ENCODE measurements at regions of chr4 and their contacts with region 1.

Region 1: DNA sequence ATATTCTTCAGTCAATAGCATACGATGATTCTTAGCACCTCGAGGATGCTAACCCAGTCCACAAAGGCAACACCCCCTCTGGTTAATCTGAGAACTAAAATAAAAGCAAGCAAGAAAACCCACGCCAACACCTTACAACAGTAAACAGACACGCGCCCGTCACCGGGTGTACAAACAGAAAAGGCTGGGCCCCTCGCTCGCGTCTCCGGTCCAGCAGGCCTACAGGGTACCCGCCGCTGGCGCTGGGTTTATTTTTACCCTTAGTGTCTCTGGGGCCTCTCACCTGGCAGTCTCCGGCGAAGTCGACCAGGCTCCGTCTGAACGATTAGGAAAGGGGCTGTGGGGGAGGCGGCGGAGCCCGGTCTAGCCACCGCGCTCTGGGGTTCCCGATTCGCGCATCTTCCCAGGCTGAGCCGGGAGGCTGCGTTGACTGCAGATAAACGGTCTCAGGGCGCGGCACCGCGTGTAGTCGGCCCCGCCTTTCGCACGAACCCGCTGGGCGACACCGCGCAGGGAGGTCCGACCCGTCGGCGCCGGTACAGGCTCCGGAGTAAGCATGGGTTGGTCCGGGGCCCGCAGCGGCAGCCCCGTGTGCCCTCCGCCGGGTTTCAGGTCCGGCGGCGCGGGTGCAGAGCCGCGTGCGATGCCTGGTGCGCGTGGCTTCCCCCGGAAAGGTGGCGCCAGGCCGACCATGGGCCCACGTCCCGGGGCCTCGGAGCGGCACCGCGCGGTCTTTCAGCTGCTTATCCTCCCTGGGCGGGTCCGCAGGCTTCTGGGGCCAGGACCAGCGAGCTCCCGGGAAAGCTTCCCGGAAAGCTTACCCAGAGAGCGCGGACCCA is 441 bp downstream of the SLC9B2 start:
- DNase-seq: peak; percentile 73
- H3K4me3 Mint-ChIP-seq: peak overlapping the region; percentile 98
- H3K27ac Mint-ChIP-seq: peak overlapping the region; percentile 99
- H3K4me1 Mint-ChIP-seq: peaks cover 52% of the 10 kb centered on the region
- H3K27me3 Mint-ChIP-seq: no peaks in the 10 kb centered on the region

Region 2: GRCh38 chr4:103046416-103047290 is 29.5 kb before region 1 on chr4:
- CTCF ChIA-PET with region 1: interaction called, 16 read pairs
- DNase-seq: peak; percentile 50
- H3K4me3 Mint-ChIP-seq: no peak overlapping the region
- H3K27ac Mint-ChIP-seq: no peak overlapping the region
- H3K4me1 Mint-ChIP-seq: peaks cover 7% of the 10 kb centered on the region
- H3K27me3 Mint-ChIP-seq: no peaks in the 10 kb centered on the region

Region 3: GRCh38 chr4:103171006-103171405 is 94.9 kb after region 1 on chr4:
- CTCF ChIA-PET with region 1: no interaction called
- DNase-seq: no peak
- H3K4me3 Mint-ChIP-seq: no peak overlapping the region
- H3K27ac Mint-ChIP-seq: no peak overlapping the region
- H3K4me1 Mint-ChIP-seq: peaks cover 5% of the 10 kb centered on the region
- H3K27me3 Mint-ChIP-seq: no peaks in the 10 kb centered on the region

Region 4: DNA sequence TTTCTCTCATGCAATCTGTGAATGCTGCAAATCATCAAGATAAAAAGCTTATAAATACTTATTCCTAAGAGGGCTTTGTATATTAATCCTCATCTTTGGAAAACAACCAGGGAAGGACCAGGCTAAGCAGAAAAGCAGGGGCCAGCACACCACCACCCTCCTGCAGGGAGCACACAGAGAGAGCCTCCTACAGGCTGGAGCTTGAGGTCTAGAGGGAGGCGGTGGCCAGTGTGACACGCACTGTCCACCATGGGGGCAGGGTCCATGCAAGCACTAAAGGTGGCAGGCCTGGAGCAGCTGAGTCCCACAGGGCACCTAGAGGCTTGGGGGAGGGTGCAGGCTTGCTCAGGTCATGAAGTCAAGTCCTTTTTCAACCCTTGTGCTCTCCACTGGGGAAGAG is 406.8 kb after region 1 on chr4:
- CTCF ChIA-PET with region 1: no interaction called
- DNase-seq: no peak
- H3K4me3 Mint-ChIP-seq: no peak overlapping the region
- H3K27ac Mint-ChIP-seq: no peak overlapping the region
- H3K4me1 Mint-ChIP-seq: no peaks in the 10 kb centered on the region
- H3K27me3 Mint-ChIP-seq: no peaks in the 10 kb centered on the region

Measured in activated naive CD4-positive, alpha-beta T cell treated with anti-CD3 and anti-CD28 coated beads, Interleukin-2, amount 10 ng/mL, durations not matched to agents 7 days and 5 days (primary cell).